Activated CD4-positive, alpha-beta T cell treated with anti-CD3 and anti-CD28 coated beads, Interleukin-2, amount 10 ng/mL, durations not matched to agents 24 days and 14 days (primary cell): ENCODE measurements at regions of chr3 and their contacts with region 1.

Region 1: GRCh38 chr3:195850857-195851543 is 39.3 kb upstream of the MUC4 start:
- DNase-seq: peak; percentile 97
- H3K4me3 Mint-ChIP-seq: peak overlapping the region; percentile 5
- H3K27ac Mint-ChIP-seq: no peak overlapping the region
- H3K4me1 Mint-ChIP-seq: peaks cover 9% of the 10 kb centered on the region
- H3K27me3 Mint-ChIP-seq: no peaks in the 10 kb centered on the region

Region 2: GRCh38 chr3:195558602-195559001 is 292.4 kb before region 1 on chr3:
- intact Hi-C with region 1: loop called (anchors 1 kb)
- DNase-seq: peak; percentile 84
- H3K4me3 Mint-ChIP-seq: no peak overlapping the region
- H3K27ac Mint-ChIP-seq: peak overlapping the region; percentile 25
- H3K4me1 Mint-ChIP-seq: peaks cover 25% of the 10 kb centered on the region
- H3K27me3 Mint-ChIP-seq: no peaks in the 10 kb centered on the region

Region 3: GRCh38 chr3:195863121-195864006 is 12.4 kb after region 1 on chr3:
- intact Hi-C with region 1: no loop called
- DNase-seq: peak; percentile 89
- H3K4me3 Mint-ChIP-seq: no peak overlapping the region
- H3K27ac Mint-ChIP-seq: no peak overlapping the region
- H3K4me1 Mint-ChIP-seq: peaks cover 6% of the 10 kb centered on the region
- H3K27me3 Mint-ChIP-seq: peaks cover 2% of the 10 kb centered on the region